ENCODE measurements at regions of chr12 and their contacts with region 1.

Region 1: DNA sequence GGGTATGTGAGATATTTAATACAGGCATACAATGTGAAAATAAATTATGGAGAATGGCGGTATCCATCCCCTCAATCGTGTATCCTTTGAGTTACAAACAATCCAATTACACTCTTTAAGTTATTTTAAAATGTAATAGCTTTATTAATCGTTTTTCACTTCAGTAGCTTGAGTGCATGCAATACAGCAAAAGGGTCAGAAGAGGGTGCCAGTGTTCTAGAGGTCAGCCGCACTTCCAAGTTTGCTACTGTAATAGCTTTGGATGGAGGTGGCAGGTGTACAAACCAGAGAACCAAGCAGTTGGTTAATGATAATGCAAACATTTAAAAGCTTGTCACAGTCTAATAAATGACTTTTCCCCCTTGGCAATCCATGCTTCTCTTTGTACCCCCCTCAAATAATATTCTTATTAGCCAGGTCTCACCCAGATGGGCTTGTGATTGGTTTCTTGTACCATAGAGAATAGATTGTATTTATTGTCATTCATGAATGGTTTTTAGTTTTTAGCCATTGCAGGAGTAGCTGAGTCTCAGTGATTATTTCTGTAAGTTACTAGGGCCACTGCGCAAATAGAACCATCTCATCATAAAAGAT is 127.0 kb downstream of the ERC1 start:
- DNase-seq: peak; percentile 66 to 72 (median 68)
- H3K4me3 ChIP-seq: no peak overlapping the region
- H3K4me3 Mint-ChIP-seq: no peak overlapping the region
- H3K27ac ChIP-seq: no peak overlapping the region
- H3K27ac Mint-ChIP-seq: no peak overlapping the region
- H3K4me1 ChIP-seq: peaks cover 8% of the 10 kb centered on the region
- H3K4me1 Mint-ChIP-seq: peaks cover 5 to 18% (median 10%) of the 10 kb centered on the region in 4 donors
- H3K27me3 ChIP-seq: no peaks in the 10 kb centered on the region
- H3K27me3 Mint-ChIP-seq: no peaks in the 10 kb centered on the region

Region 2: DNA sequence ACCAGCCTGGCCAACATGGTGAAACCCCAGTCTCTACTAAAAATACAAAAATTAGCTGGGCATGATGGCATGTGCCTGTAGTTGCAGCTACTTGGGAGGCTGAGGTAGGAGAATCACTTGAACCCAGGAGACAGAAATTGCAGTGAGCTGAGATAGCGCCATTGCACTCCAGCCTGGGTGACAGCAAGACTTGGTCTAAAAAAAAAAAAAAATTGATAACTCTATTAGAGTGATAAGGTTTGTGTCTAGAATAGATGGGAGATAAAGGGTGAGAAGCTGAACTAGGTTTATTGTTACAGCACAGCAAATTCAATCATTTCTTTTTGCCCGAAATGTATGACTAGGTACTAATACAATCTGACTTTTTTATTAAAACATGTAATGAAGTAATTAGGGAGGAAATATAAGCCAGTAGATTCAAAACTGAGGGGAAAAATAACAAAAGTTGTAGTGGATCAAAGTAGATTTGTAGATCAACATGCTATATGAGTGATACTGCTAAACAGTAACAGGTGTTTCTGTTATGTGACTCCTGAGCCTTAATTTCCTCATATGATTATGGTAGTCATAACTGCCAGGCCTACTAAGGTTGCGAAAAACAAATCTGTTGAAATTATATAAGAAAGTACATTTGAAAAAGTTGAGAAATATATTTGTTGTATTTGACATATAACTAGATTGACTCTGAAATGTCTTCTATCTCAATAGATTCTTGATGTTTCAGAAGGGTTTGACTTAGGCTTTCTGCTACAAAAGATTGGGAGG is 282.1 kb before region 1 on chr12:
- CTCF ChIA-PET with region 1: no interaction called
- POLR2A ChIA-PET with region 1: no interaction called
- intact Hi-C with region 1: no loop called
- DNase-seq: no peak
- H3K4me3 ChIP-seq: no peak overlapping the region
- H3K4me3 Mint-ChIP-seq: no peak overlapping the region
- H3K27ac ChIP-seq: no peak overlapping the region
- H3K27ac Mint-ChIP-seq: peak overlapping the region in 4 of 7 donors; percentile 12 to 77 (median 42)
- H3K4me1 ChIP-seq: no peaks in the 10 kb centered on the region
- H3K4me1 Mint-ChIP-seq: peaks cover 27 to 52% (median 39%) of the 10 kb centered on the region in 4 donors
- H3K27me3 ChIP-seq: no peaks in the 10 kb centered on the region
- H3K27me3 Mint-ChIP-seq: no peaks in the 10 kb centered on the region

Region 3: GRCh38 chr12:1093166-1093751 is 24.8 kb before region 1 on chr12:
- CTCF ChIA-PET with region 1: interaction called, 13 read pairs
- POLR2A ChIA-PET with region 1: no interaction called
- intact Hi-C with region 1: no loop called
- DNase-seq: peak; percentile 38 to 52 (median 44)
- H3K4me3 ChIP-seq: no peak overlapping the region
- H3K4me3 Mint-ChIP-seq: no peak overlapping the region
- H3K27ac ChIP-seq: no peak overlapping the region
- H3K27ac Mint-ChIP-seq: no peak overlapping the region
- H3K4me1 ChIP-seq: no peaks in the 10 kb centered on the region
- H3K4me1 Mint-ChIP-seq: peaks cover 1 to 15% (median 8%) of the 10 kb centered on the region in 4 donors
- H3K27me3 ChIP-seq: no peaks in the 10 kb centered on the region
- H3K27me3 Mint-ChIP-seq: no peaks in the 10 kb centered on the region

Region 4: DNA sequence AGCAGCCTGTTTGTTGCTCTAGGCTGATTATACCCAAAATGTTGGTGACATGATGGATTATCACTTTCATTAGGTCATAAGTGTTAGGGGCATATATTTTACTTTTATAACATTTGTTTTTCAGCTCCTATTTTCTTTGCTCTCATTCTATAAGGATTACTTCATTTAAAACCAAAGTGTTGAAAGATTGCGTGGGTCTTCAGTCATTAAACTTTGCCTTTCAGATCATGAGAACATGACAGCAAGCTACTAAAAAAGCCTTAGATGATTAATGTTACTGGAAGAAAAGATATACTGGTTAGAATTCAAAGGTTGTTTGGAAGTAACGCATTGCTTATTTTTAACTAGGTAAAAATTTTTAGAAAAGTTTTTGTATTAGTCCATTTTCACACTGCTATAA is 29.8 kb after region 1 on chr12:
- CTCF ChIA-PET with region 1: interaction called, 14 read pairs
- POLR2A ChIA-PET with region 1: no interaction called
- intact Hi-C with region 1: no loop called
- DNase-seq: no peak
- H3K4me3 ChIP-seq: no peak overlapping the region
- H3K4me3 Mint-ChIP-seq: no peak overlapping the region
- H3K27ac ChIP-seq: no peak overlapping the region
- H3K27ac Mint-ChIP-seq: no peak overlapping the region
- H3K4me1 ChIP-seq: no peaks in the 10 kb centered on the region
- H3K4me1 Mint-ChIP-seq: peaks cover 0 to 6% (median 2%) of the 10 kb centered on the region in 4 donors
- H3K27me3 ChIP-seq: no peaks in the 10 kb centered on the region
- H3K27me3 Mint-ChIP-seq: no peaks in the 10 kb centered on the region

Region 5: GRCh38 chr12:1474041-1474573 is 356.0 kb after region 1 on chr12:
- CTCF ChIA-PET with region 1: interaction called, 10 read pairs
- POLR2A ChIA-PET with region 1: no interaction called
- intact Hi-C with region 1: no loop called
- DNase-seq: no peak
- H3K4me3 ChIP-seq: no peak overlapping the region
- H3K4me3 Mint-ChIP-seq: no peak overlapping the region
- H3K27ac ChIP-seq: no peak overlapping the region
- H3K27ac Mint-ChIP-seq: no peak overlapping the region
- H3K4me1 ChIP-seq: peaks cover 15% of the 10 kb centered on the region
- H3K4me1 Mint-ChIP-seq: peaks cover 0 to 8% (median 3%) of the 10 kb centered on the region in 4 donors
- H3K27me3 ChIP-seq: no peaks in the 10 kb centered on the region
- H3K27me3 Mint-ChIP-seq: no peaks in the 10 kb centered on the region

Region 6: GRCh38 chr12:1583421-1584078 is 465.5 kb after region 1 on chr12:
- CTCF ChIA-PET with region 1: interaction called, 302 read pairs
- POLR2A ChIA-PET with region 1: interaction called, 32 read pairs
- intact Hi-C with region 1: loop called (anchors 1 kb)
- DNase-seq: peak; percentile 60 to 68 (median 67)
- H3K4me3 ChIP-seq: no peak overlapping the region
- H3K4me3 Mint-ChIP-seq: peak overlapping the region in 2 of 8 donors; percentile 45 to 51
- H3K27ac ChIP-seq: no peak overlapping the region
- H3K27ac Mint-ChIP-seq: peak overlapping the region in 5 of 7 donors; percentile 35 to 81 (median 72)
- H3K4me1 ChIP-seq: peaks cover 21% of the 10 kb centered on the region
- H3K4me1 Mint-ChIP-seq: peaks cover 14 to 22% (median 19%) of the 10 kb centered on the region in 4 donors
- H3K27me3 ChIP-seq: no peaks in the 10 kb centered on the region
- H3K27me3 Mint-ChIP-seq: no peaks in the 10 kb centered on the region

Region 7: DNA sequence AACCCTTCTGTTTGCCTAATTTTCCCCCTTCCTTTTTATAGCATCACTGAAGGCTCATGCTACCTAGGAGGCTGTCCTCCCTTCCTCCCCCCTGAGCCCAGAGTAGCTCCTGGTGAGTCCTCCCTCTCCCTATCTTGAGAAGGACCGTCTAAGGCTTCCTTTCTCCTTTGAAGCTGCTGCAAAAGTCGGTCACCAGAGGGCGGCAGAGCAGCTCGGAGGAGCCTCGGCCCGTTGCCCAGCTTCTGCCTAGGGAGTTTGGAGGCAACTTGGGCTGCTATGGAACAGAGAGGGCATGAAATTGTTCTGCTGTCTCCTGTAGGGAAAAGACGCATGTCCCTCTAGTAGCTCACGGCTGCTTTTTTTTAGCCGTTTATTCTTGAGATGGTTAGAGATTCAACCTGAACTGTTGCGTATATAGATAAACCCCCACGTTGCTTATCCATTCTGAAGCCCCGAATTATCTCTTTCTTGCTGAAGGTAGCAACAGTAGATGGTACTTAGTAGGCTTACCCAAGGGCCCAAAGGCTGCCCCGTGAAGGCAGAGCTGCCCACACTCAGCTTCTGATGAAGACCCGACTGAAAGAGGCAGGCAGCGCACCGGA is 516.6 kb after region 1 on chr12:
- CTCF ChIA-PET with region 1: interaction called, 27 read pairs
- POLR2A ChIA-PET with region 1: no interaction called
- intact Hi-C with region 1: no loop called
- DNase-seq: peak in 4 of 5 donors; percentile 36 to 46 (median 40)
- H3K4me3 ChIP-seq: no peak overlapping the region
- H3K4me3 Mint-ChIP-seq: no peak overlapping the region
- H3K27ac ChIP-seq: no peak overlapping the region
- H3K27ac Mint-ChIP-seq: no peak overlapping the region
- H3K4me1 ChIP-seq: peaks cover 12% of the 10 kb centered on the region
- H3K4me1 Mint-ChIP-seq: peaks cover 5 to 15% (median 12%) of the 10 kb centered on the region in 4 donors
- H3K27me3 ChIP-seq: peaks cover 17% of the 10 kb centered on the region
- H3K27me3 Mint-ChIP-seq: peaks cover 27 to 39% of the 10 kb centered on the region in 2 donors

Region 8: GRCh38 chr12:1731019-1731687 is 613.1 kb after region 1 on chr12:
- CTCF ChIA-PET with region 1: no interaction called
- POLR2A ChIA-PET with region 1: no interaction called
- intact Hi-C with region 1: no loop called
- DNase-seq: no peak
- H3K4me3 ChIP-seq: no peak overlapping the region
- H3K4me3 Mint-ChIP-seq: no peak overlapping the region
- H3K27ac ChIP-seq: no peak overlapping the region
- H3K27ac Mint-ChIP-seq: no peak overlapping the region
- H3K4me1 ChIP-seq: peaks cover 15% of the 10 kb centered on the region
- H3K4me1 Mint-ChIP-seq: peaks cover 21 to 44% (median 23%) of the 10 kb centered on the region in 4 donors
- H3K27me3 ChIP-seq: no peaks in the 10 kb centered on the region
- H3K27me3 Mint-ChIP-seq: no peaks in the 10 kb centered on the region

Measured in CD4-positive, alpha-beta memory T cell (primary cell).